ENCODE measurements at regions of chr1 and their contacts with region 1.

Region 1: DNA sequence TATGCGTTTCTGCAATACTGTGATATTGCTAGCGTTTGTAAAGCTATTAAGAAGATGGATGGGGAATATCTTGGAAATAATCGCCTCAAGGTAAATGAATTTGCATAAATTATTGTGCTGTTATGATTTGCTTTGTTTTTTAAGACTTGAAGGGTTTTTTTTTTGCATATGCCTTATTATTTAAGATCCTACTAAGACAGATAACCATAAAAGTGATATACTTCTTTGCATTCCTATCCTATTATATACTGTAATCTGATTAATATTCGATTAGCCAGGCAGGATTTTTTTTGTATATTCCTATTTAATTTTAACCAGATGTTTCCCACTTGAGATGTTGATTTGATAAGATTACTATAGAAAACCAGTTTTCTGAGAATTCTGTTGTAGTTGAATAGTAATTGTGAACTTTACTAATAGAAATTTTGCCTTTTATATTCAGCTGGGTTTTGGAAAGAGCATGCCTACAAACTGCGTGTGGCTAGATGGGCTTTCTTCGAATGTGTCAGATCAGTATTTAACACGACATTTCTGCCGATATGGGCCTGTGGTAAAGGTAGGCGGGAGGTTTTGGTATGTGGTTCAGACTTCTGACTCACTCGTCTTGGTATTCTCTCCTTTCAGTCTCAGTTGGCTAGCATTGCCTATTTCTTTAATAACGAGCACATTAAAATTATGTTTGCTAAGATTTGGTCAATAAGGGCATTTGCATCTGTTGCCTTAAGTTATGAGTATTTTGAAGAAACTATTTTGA is 56.8 kb downstream of the ZBTB17 start:
- DNase-seq: peak in 9 of 14 experiments; percentile 14 to 71 (median 27)
- ATAC-seq: peak; percentile 84
- H3K4me3 ChIP-seq: no peak overlapping the region
- H3K4me3 Mint-ChIP-seq: no peak overlapping the region
- H3K27ac ChIP-seq: no peak overlapping the region
- H3K27ac Mint-ChIP-seq: peak overlapping the region; percentile 18
- H3K4me1 ChIP-seq: peaks cover 17% of the 10 kb centered on the region
- H3K4me1 Mint-ChIP-seq: peaks cover 30% of the 10 kb centered on the region
- H3K27me3 ChIP-seq: no peaks in the 10 kb centered on the region
- H3K27me3 Mint-ChIP-seq: no peaks in the 10 kb centered on the region
- CTCF ChIP-seq: no peak

Region 2: DNA sequence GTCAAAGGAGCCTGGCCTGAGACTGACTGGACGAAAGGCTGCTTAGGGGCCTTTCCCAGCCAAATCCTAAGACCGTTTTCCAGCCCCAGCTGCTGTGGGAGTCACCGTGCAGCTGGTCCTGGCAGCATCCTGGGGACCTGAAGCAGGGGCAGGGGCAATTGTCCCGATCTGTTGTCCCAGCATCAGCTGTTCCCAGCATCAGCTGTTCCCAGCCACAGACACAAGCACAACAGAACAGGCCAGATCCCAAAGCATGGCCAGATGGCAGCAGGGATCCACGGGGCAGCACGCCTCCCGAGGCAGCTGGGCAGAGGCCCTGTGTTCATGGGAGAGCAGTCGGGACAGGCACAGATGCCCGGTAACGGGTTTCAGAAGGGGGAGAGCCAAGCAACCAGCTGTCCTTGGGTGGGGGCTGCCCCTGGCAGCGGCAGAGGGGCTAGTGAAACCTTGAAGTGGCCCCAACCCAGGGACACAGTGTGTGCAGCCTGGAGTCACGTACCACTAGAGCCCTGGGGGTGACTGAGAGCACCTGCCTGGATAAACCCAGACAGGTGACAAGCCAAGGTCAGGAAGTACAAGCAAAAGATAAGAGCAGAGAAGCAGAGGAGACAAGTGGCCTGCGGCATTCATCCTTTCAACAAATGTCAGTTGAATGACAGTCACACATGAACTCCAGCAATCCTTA is 429.9 kb before region 1 on chr1:
- CTCF ChIA-PET with region 1: no interaction called
- POLR2A ChIA-PET with region 1: no interaction called
- intact Hi-C with region 1: no loop called
- DNase-seq: no peak
- ATAC-seq: no peak
- H3K4me3 ChIP-seq: no peak overlapping the region
- H3K4me3 Mint-ChIP-seq: no peak overlapping the region
- H3K27ac ChIP-seq: no peak overlapping the region
- H3K27ac Mint-ChIP-seq: no peak overlapping the region
- H3K4me1 ChIP-seq: no peaks in the 10 kb centered on the region
- H3K4me1 Mint-ChIP-seq: no peaks in the 10 kb centered on the region
- H3K27me3 ChIP-seq: no peaks in the 10 kb centered on the region
- H3K27me3 Mint-ChIP-seq: no peaks in the 10 kb centered on the region
- CTCF ChIP-seq: no peak

Region 3: DNA sequence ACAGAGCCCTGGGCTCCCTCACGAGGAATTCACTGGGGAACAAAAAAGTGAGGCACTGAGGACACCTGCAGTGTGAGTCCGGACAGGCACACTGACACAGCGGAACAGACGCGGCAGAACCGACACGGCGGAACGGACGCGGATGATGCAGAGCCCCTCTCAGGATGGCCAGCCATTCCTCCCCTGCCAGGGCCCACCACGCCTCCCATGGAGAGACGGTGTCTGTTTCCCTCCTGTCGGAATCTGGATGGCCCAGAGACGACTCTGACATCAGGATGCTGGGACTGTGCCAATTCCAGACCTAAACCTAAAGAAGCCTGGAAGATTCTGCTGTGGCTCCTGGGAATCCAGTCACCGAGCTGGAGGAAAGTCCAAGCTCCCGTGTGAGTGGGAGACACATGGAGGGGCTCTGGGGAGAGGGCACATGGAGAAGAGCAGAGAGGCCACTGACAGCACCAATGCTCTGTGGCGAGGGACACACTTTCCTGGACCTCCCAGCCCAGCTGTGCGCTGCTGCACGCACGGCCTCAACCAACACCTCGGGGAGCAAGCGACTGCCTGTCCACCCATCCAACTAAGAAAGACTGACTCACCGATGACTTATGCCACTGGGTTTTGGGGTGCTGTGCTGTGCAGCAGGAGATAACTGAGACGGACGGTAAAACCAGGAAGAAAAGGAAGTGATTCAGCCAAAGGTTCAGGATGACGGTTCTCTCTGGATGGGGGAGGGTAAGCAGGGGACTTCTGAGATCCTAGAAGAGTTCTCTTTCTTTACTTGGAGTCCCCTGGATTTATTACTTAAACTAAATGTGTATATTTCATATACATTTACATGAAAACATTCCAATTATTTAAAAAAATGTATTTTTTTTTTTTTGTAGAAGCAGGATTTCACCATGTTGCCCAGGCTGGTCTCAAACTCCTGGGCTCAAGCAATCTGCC is 33.4 kb after region 1 on chr1:
- CTCF ChIA-PET with region 1: no interaction called
- POLR2A ChIA-PET with region 1: no interaction called
- intact Hi-C with region 1: loop called in 1 of 2 experiments (anchors 5 kb)
- DNase-seq: peak in 3 of 14 experiments; percentile 27 to 76 (median 65)
- ATAC-seq: no peak
- H3K4me3 ChIP-seq: no peak overlapping the region
- H3K4me3 Mint-ChIP-seq: no peak overlapping the region
- H3K27ac ChIP-seq: no peak overlapping the region
- H3K27ac Mint-ChIP-seq: peak overlapping the region; percentile 98
- H3K4me1 ChIP-seq: peaks cover 80% of the 10 kb centered on the region
- H3K4me1 Mint-ChIP-seq: peaks cover 86% of the 10 kb centered on the region
- H3K27me3 ChIP-seq: no peaks in the 10 kb centered on the region
- H3K27me3 Mint-ChIP-seq: no peaks in the 10 kb centered on the region
- CTCF ChIP-seq: no peak

Region 4: DNA sequence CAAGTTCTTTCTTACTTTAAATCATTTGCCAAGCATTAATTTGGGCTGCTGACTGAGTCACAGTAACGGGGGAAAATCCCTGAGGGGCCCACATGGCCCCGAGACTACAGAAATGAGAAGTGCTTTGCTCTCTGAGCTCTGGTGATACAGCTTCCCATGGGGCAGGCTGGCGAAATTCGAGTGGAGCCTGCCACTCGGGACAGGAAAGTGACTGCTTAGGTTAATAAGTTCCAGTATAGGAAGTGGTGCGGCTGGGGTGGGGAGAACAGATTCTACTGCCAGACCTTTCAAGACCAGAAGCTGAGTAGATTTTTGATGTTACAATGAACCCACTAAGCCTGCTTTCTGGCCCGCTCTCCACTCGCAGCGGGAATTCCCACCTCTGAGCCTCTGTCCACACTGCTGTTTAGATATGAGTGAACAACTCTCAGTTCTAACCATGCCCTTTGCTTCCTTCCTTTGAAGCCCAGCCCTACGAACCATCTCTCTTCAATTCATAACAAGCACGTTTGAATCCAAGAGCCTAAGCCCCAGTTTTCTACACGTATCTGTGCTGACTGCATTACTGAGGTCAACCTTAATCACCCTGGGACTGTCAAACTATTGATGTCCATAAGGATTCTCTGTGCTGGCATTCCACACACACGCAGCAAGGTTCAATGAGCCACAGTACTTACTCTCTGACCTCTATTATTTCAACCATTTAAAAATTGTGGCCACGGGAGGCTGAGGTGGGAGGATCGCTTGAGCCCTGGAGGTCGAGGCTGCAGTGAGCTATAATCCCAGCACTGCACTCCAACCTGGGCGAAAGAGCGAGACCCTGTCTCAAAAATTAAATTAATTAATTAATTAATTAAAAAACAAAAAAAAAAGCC is 47.2 kb after region 1 on chr1:
- CTCF ChIA-PET with region 1: no interaction called
- POLR2A ChIA-PET with region 1: no interaction called
- intact Hi-C with region 1: loop called in 1 of 2 experiments (anchors 5 kb)
- DNase-seq: peak in 12 of 14 experiments; percentile 19 to 81 (median 40)
- ATAC-seq: peak; percentile 64
- H3K4me3 ChIP-seq: peak overlapping the region; percentile 17
- H3K4me3 Mint-ChIP-seq: peak overlapping the region; percentile 66
- H3K27ac ChIP-seq: peak overlapping the region; percentile 5 to 55
- H3K27ac Mint-ChIP-seq: peak overlapping the region; percentile 76
- H3K4me1 ChIP-seq: peaks cover 38% of the 10 kb centered on the region
- H3K4me1 Mint-ChIP-seq: peaks cover 67% of the 10 kb centered on the region
- H3K27me3 ChIP-seq: no peaks in the 10 kb centered on the region
- H3K27me3 Mint-ChIP-seq: no peaks in the 10 kb centered on the region
- CTCF ChIP-seq: no peak

Region 5: GRCh38 chr1:16324456-16324890 is 405.3 kb after region 1 on chr1:
- CTCF ChIA-PET with region 1: no interaction called
- POLR2A ChIA-PET with region 1: no interaction called
- intact Hi-C with region 1: no loop called
- DNase-seq: no peak
- ATAC-seq: no peak
- H3K4me3 ChIP-seq: no peak overlapping the region
- H3K4me3 Mint-ChIP-seq: no peak overlapping the region
- H3K27ac ChIP-seq: no peak overlapping the region
- H3K27ac Mint-ChIP-seq: no peak overlapping the region
- H3K4me1 ChIP-seq: no peaks in the 10 kb centered on the region
- H3K4me1 Mint-ChIP-seq: peaks cover 28% of the 10 kb centered on the region
- H3K27me3 ChIP-seq: no peaks in the 10 kb centered on the region
- H3K27me3 Mint-ChIP-seq: no peaks in the 10 kb centered on the region
- CTCF ChIP-seq: no peak

Region 6: DNA sequence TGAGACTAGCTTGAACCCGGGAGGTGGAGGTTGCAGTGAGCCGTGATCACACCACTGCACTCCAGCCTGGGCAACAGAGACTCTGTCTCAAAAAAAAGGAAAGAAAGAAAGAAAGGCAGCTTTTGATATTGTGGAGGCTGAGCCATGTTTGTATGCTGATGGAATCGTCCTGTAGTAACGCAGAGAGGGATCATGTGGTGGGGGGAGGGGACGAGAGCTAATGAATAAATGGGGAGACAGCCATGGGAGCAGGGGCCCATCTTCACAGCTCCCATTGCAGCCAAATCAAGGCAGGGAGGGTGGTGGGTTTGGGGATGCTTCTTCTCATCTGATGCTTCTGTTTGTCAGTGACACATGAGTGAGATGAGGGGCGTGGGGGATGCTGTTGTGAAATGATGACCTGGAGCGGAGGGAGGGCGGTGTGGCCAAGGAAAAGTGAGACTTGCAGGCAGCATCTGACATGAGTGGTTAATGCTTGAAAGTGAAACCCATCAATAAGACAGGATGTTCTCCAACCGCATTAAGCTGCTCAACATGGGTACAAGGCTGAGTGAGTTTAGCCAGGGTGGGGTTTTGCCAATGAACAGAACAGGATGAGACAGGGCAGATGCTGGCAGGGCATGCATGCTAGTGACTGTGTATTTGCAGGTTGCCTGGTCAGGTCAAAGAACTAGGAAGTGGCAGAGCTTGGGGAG is 501.4 kb after region 1 on chr1:
- CTCF ChIA-PET with region 1: no interaction called
- POLR2A ChIA-PET with region 1: no interaction called
- intact Hi-C with region 1: no loop called
- DNase-seq: peak; percentile 19 to 91 (median 45)
- ATAC-seq: peak; percentile 95
- H3K4me3 ChIP-seq: peak overlapping the region; percentile 7
- H3K4me3 Mint-ChIP-seq: peak overlapping the region; percentile 36
- H3K27ac ChIP-seq: peak overlapping the region; percentile 30 to 65
- H3K27ac Mint-ChIP-seq: peak overlapping the region; percentile 74
- H3K4me1 ChIP-seq: peaks cover 32% of the 10 kb centered on the region
- H3K4me1 Mint-ChIP-seq: peaks cover 29% of the 10 kb centered on the region
- H3K27me3 ChIP-seq: no peaks in the 10 kb centered on the region
- H3K27me3 Mint-ChIP-seq: no peaks in the 10 kb centered on the region
- CTCF ChIP-seq: no peak

Measured in CD4-positive, alpha-beta T cell (primary cell).